Left ventricle myocardium superior (tissue), 1 donor: ENCODE measurements at regions of chr19 and their contacts with region 1.

Region 1: GRCh38 chr19:36719687-36720556 is 32.5 kb downstream of the ZNF567 start:
- DNase-seq: no peak
- ATAC-seq: no peak

Region 2: DNA sequence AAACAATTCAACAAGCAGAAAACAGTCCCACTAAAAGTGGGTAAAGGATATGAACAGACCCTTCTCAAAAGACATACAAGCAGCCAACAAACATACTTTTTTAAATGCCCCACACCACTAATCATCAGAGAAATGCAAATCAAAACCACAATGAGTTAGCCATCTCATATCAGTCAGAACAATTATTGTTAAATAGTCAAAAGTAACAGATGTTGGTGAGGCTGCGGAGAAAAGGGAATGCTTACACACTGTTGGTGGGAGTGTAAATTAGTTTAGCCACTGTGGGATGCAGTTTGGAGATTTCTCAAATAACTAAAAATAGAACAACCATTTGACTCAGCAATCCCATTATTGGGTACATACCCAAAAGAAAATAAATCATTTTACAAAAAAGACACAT is 155.5 kb before region 1 on chr19:
- intact Hi-C with region 1: no loop called
- DNase-seq: no peak
- ATAC-seq: no peak

Region 3: DNA sequence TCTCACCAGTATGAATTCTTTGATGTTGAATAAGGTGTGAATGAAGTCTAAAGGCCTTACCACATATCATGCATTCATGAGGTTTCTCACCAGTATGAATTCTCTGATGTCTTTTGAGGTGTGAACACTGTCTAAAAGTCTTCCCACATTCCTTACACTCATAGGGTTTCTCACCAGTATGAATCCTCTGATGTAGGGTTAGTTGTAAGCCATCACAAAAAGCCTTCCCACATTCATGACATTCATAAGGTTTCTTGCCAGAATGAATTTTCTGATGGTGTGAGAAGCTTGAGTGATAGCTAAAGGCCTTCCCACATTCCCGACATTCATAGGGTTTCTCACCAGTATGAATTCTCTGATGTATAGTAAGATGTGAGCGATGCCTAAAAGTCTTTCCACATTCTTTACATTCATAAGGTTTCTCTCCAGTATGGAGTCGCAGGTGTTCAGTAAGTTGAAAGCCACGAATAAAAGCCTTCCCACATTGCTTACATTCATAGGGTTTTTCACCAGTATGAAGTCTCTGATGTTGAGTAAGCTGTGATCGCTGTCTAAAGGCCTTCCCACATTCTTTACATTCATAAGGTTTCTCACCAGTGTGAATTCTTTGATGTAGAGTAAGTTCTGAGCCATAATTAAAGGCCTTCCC is 80.9 kb before region 1 on chr19:
- intact Hi-C with region 1: no loop called
- DNase-seq: no peak
- ATAC-seq: no peak

Region 4: DNA sequence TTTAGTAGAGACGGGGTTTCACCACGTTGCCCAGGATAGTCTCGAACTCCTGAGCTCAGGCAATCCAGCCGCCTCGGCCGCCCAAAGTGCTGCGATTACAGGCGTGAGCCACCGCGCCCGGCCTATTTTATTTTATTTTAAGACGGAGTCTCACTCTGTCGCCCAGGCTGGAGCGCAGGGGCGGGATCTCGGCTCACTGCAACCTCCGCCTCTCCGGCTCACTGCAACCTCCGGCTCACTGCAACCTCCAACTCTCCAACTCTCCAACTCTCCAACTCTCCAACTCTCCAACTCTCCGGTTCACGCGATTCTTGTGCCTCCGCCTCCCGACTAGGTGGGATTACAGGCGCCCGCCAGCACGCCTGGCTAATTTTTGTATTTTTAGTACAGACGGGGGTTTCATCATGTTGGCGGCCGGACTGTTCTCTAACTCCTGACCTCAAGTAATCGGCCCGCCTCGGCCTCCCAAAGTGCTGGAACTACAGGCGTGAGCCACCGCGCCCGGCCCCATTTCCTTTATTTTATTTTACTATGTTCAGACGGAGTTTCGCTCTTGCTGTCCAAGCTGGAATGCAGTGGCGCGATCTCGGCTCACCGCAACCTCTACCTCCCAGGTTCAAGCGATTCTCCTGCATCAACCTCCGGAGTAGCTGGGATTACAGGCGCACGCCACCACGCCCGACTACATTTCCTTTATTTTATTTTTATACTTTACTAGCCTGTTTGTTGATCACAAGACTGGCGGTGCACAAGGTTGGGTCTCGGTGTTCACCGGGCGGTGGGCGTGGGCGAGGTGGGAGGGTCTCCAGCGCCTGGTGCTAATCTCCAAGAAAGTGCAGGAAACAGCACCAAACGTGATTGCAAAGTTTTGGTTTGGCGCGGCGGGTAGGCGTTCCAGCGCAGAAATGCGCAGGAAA is 76.4 kb after region 1 on chr19:
- intact Hi-C with region 1: no loop called
- DNase-seq: no peak
- ATAC-seq: no peak

Region 5: GRCh38 chr19:36876993-36877938 is 157.3 kb after region 1 on chr19:
- intact Hi-C with region 1: loop called (anchors 10 kb)
- DNase-seq: no peak
- ATAC-seq: no peak